OCI-LY7 (cell line): ENCODE measurements at regions of chr16 and their contacts with region 1.

Region 1: GRCh38 chr16:4846891-4847773 is at the starts of genes GLYR1 and UBN1:
- DNase-seq: peak; percentile 98
- H3K4me3 ChIP-seq: peak within 1 kb of the TSS; percentile 96
- H3K27ac ChIP-seq: peak within 1 kb of the TSS; percentile 74
- H3K4me1 ChIP-seq: peaks cover 38% of the 10 kb centered on the region
- CTCF ChIP-seq: no peak
- total RNA-seq, gene GLYR1: 48.4 and 54.4 TPM in 2 replicates
- total RNA-seq, gene UBN1: 35.8 and 37.2 TPM in 2 replicates

Region 2: DNA sequence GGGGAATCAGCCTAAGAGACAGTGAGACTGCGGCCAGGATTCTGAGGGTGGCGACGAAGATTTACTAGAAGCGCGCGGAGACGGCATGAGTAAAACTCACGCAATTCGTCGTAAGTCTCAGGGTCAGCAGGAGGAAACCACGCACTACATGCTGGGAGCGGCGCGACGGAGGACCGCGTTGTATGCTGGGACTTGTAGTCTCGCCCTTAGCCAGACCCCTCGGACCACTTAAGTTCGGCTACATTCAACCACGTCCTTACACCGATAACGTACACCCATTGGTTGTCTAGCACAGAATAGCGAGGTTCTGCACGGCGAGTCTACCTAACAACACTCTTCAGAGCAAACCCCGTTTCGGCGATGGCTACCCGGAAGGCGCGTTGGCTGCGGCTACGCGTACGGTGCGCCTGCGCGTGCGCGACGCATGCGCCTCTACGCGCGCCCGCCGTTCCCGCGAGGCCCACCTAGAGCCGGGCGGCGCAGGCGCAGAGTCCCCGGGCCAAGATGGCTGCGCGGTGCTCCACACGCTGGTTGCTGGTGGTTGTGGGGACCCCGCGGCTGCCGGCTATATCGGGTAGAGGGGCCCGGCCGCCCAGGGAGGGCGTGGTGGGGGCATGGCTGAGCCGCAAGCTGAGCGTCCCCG is 421.6 kb before region 1 on chr16 and contains the start of gene DNAJA3:
- CTCF ChIA-PET with region 1: no interaction called
- POLR2A ChIA-PET with region 1: no interaction called
- intact Hi-C with region 1: loop called (anchors 10 kb)
- DNase-seq: peak; percentile 97
- H3K4me3 ChIP-seq: peak within 1 kb of the TSS; percentile 90
- H3K27ac ChIP-seq: peak within 1 kb of the TSS; percentile 88
- H3K4me1 ChIP-seq: peaks cover 23% of the 10 kb centered on the region
- CTCF ChIP-seq: no peak
- total RNA-seq, gene DNAJA3: 89.8 and 94.5 TPM in 2 replicates

Region 3: GRCh38 chr16:4682616-4683254 is 164.4 kb before region 1 on chr16:
- CTCF ChIA-PET with region 1: no interaction called
- POLR2A ChIA-PET with region 1: no interaction called
- intact Hi-C with region 1: no loop called
- DNase-seq: no peak
- H3K4me3 ChIP-seq: no peak overlapping the region
- H3K27ac ChIP-seq: no peak overlapping the region
- H3K4me1 ChIP-seq: no peaks in the 10 kb centered on the region
- CTCF ChIP-seq: peak; percentile 60

Region 4: DNA sequence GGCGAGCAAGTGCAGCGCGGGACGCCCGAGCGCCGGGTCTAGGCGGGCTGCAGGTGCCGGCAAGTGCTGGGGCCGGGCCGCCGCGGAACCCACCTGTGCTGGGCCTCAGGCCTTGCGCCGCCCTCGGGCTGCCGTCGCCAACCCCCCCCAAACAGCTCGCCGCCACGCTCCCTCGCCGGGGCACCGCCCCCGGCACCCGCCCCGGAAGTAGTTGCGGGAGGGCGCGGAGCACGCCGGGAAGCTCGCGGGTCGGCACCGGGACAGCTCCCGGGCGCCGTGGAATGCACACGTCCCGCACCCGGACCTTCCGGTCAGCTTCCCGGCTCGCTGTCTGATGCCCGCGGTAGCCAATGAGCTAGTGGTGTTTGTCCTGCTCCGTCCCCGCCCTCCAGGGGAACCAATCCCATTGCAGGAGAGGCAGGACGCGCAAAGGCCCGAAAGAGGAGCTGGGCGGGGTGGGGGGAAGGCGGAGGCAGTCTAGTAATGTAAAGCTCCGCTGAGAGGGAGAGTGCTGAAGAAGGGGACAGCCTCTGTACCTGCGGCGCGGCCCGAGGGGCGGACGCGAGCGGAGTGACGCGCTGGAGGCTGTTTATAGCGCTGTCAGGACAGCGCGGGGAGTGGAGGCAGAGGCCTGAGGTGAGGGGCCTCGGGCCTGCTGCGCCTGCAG is 112.9 kb before region 1 on chr16 and contains the starts of genes ANKS3 and DNAAF8:
- CTCF ChIA-PET with region 1: no interaction called
- POLR2A ChIA-PET with region 1: no interaction called
- intact Hi-C with region 1: loop called (anchors 2 kb)
- DNase-seq: peak; percentile 82
- H3K4me3 ChIP-seq: peak within 1 kb of the TSS; percentile 89
- H3K27ac ChIP-seq: peak within 1 kb of the TSS; percentile 64
- H3K4me1 ChIP-seq: peaks cover 15% of the 10 kb centered on the region
- CTCF ChIP-seq: no peak
- total RNA-seq, gene ANKS3: 17.6 and 19.5 TPM in 2 replicates
- total RNA-seq, gene DNAAF8: 0.36 and 0.38 TPM in 2 replicates

Region 5: GRCh38 chr16:4802659-4803287 is 44.4 kb before region 1 on chr16:
- CTCF ChIA-PET with region 1: no interaction called
- POLR2A ChIA-PET with region 1: interaction called, 3 read pairs
- intact Hi-C with region 1: loop called (anchors 2 kb)
- DNase-seq: peak; percentile 91
- H3K4me3 ChIP-seq: peak overlapping the region; percentile 78
- H3K27ac ChIP-seq: peak overlapping the region; percentile 59
- H3K4me1 ChIP-seq: peaks cover 26% of the 10 kb centered on the region
- CTCF ChIP-seq: no peak